Caco-2 (cell line): ENCODE measurements at regions of chr12 and their contacts with region 1.

Region 1: DNA sequence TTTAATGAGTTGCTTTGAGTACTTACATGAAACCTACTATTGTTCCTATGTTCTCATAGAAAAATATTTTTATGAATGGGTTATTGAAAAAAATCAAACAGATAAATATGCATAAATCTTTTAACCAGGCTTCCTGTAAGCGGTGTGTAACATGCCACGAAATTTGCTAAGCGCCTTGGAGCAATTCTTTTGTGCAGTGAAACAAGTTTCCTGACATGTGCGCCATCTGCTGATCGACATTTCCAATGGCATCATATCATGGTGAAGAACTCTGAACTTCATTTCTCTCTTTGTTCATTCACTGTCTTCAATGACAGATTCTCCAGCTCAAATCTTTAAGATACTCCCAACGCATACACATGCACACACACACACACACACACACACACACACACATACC is 145.6 kb upstream of the NAV3 start:
- DNase-seq: peak; percentile 40 to 61
- H3K4me3 ChIP-seq: no peak overlapping the region
- H3K4me3 Mint-ChIP-seq: no peak overlapping the region
- H3K27ac Mint-ChIP-seq: no peak overlapping the region
- H3K4me1 ChIP-seq: no peaks in the 10 kb centered on the region
- H3K4me1 Mint-ChIP-seq: no peaks in the 10 kb centered on the region
- H3K27me3 ChIP-seq: no peaks in the 10 kb centered on the region
- H3K27me3 Mint-ChIP-seq: peaks cover 3% of the 10 kb centered on the region
- CTCF ChIP-seq: peak; percentile 39 to 64

Region 2: GRCh38 chr12:76952995-76953394 is 732.1 kb before region 1 on chr12:
- CTCF ChIA-PET with region 1: no interaction called
- POLR2A ChIA-PET with region 1: no interaction called
- intact Hi-C with region 1: loop called (anchors 10 kb)
- DNase-seq: peak in 1 of 2 experiments; percentile 40
- H3K4me3 ChIP-seq: no peak overlapping the region
- H3K4me3 Mint-ChIP-seq: no peak overlapping the region
- H3K27ac Mint-ChIP-seq: no peak overlapping the region
- H3K4me1 ChIP-seq: no peaks in the 10 kb centered on the region
- H3K4me1 Mint-ChIP-seq: no peaks in the 10 kb centered on the region
- H3K27me3 ChIP-seq: no peaks in the 10 kb centered on the region
- H3K27me3 Mint-ChIP-seq: peaks cover 16% of the 10 kb centered on the region
- CTCF ChIP-seq: peak in 1 of 2 experiments; percentile 33

Region 3: GRCh38 chr12:77049767-77050353 is 635.3 kb before region 1 on chr12:
- CTCF ChIA-PET with region 1: no interaction called
- POLR2A ChIA-PET with region 1: no interaction called
- intact Hi-C with region 1: loop called (anchors 1 kb)
- DNase-seq: peak in 1 of 2 experiments; percentile 61
- H3K4me3 ChIP-seq: no peak overlapping the region
- H3K4me3 Mint-ChIP-seq: no peak overlapping the region
- H3K27ac Mint-ChIP-seq: no peak overlapping the region
- H3K4me1 ChIP-seq: no peaks in the 10 kb centered on the region
- H3K4me1 Mint-ChIP-seq: no peaks in the 10 kb centered on the region
- H3K27me3 ChIP-seq: no peaks in the 10 kb centered on the region
- H3K27me3 Mint-ChIP-seq: no peaks in the 10 kb centered on the region
- CTCF ChIP-seq: peak; percentile 47 to 69

Region 4: DNA sequence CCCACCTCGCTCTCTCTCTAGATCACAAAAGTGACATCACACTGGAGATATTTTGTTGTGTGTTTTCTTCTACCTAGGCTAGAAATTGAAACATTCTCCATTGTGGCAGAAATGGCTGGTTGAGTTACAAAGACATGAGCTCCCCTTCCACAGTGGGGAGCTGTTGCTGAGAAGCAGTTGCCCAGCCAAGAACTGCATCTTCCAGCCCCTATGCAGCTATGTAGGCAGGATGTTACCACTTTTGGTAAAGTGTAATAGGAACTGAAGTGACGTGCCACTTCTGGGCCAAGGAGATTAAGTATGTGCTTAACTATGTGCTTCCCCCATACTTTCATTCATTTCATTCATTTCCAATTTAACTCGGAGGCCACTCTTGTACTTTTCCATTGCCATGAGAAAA is 481.0 kb before region 1 on chr12:
- CTCF ChIA-PET with region 1: no interaction called
- POLR2A ChIA-PET with region 1: no interaction called
- intact Hi-C with region 1: loop called (anchors 1 kb)
- DNase-seq: peak in 1 of 2 experiments; percentile 10
- H3K4me3 ChIP-seq: no peak overlapping the region
- H3K4me3 Mint-ChIP-seq: no peak overlapping the region
- H3K27ac Mint-ChIP-seq: no peak overlapping the region
- H3K4me1 ChIP-seq: no peaks in the 10 kb centered on the region
- H3K4me1 Mint-ChIP-seq: no peaks in the 10 kb centered on the region
- H3K27me3 ChIP-seq: no peaks in the 10 kb centered on the region
- H3K27me3 Mint-ChIP-seq: no peaks in the 10 kb centered on the region
- CTCF ChIP-seq: no peak

Region 5: DNA sequence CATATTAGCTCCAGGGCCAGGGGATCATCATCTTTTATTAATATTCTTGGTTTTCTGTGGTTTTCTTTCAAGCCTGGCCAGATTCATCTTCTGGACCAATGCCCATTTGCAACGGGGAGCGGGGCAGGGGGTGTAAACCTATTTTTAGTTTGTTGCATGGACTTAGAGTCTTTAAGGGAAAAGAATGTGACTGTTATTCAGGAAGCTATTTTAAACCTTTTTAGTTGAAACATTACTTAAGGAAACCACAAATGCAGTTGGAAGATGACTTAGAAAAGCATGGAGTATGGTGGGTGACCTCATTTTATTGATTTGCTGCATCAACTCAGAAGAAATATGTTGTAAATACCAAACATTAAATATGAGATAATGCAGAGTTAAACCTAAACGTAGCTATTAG is 251.3 kb before region 1 on chr12:
- CTCF ChIA-PET with region 1: no interaction called
- POLR2A ChIA-PET with region 1: no interaction called
- intact Hi-C with region 1: loop called (anchors 10 kb)
- DNase-seq: no peak
- H3K4me3 ChIP-seq: no peak overlapping the region
- H3K4me3 Mint-ChIP-seq: no peak overlapping the region
- H3K27ac Mint-ChIP-seq: no peak overlapping the region
- H3K4me1 ChIP-seq: no peaks in the 10 kb centered on the region
- H3K4me1 Mint-ChIP-seq: no peaks in the 10 kb centered on the region
- H3K27me3 ChIP-seq: no peaks in the 10 kb centered on the region
- H3K27me3 Mint-ChIP-seq: peaks cover 3% of the 10 kb centered on the region
- CTCF ChIP-seq: no peak

Region 6: DNA sequence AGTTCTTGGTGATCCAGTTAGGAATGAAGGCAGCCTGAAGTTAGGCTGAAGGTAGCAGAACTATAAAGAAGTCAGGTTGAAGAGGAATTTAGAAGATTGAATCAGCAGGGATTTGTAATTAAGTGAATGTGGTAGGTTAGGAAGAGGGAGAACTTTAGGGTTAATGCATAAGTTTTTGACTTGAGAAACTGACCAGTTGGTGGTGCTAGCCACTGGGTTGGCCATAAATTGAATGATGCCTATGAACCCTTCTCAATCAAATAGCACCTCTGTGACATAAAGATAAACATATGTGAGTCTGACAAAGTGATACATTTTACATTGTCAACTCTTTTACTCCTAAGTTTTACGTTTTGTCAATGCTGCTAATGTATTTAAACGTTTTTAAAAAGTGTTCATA is 145.0 kb before region 1 on chr12:
- CTCF ChIA-PET with region 1: no interaction called
- POLR2A ChIA-PET with region 1: no interaction called
- intact Hi-C with region 1: loop called (anchors 5 kb)
- DNase-seq: no peak
- H3K4me3 ChIP-seq: no peak overlapping the region
- H3K4me3 Mint-ChIP-seq: no peak overlapping the region
- H3K27ac Mint-ChIP-seq: no peak overlapping the region
- H3K4me1 ChIP-seq: no peaks in the 10 kb centered on the region
- H3K4me1 Mint-ChIP-seq: no peaks in the 10 kb centered on the region
- H3K27me3 ChIP-seq: no peaks in the 10 kb centered on the region
- H3K27me3 Mint-ChIP-seq: no peaks in the 10 kb centered on the region
- CTCF ChIP-seq: peak in 1 of 2 experiments; percentile 2

Region 7: GRCh38 chr12:77615331-77615730 is 69.8 kb before region 1 on chr12:
- CTCF ChIA-PET with region 1: no interaction called
- POLR2A ChIA-PET with region 1: no interaction called
- intact Hi-C with region 1: loop called (anchors 1 kb)
- DNase-seq: no peak
- H3K4me3 ChIP-seq: no peak overlapping the region
- H3K4me3 Mint-ChIP-seq: no peak overlapping the region
- H3K27ac Mint-ChIP-seq: no peak overlapping the region
- H3K4me1 ChIP-seq: no peaks in the 10 kb centered on the region
- H3K4me1 Mint-ChIP-seq: no peaks in the 10 kb centered on the region
- H3K27me3 ChIP-seq: no peaks in the 10 kb centered on the region
- H3K27me3 Mint-ChIP-seq: no peaks in the 10 kb centered on the region
- CTCF ChIP-seq: no peak

Region 8: GRCh38 chr12:77816196-77816595 is 131.1 kb after region 1 on chr12:
- CTCF ChIA-PET with region 1: no interaction called
- POLR2A ChIA-PET with region 1: no interaction called
- intact Hi-C with region 1: no loop called
- DNase-seq: no peak
- H3K4me3 ChIP-seq: no peak overlapping the region
- H3K4me3 Mint-ChIP-seq: no peak overlapping the region
- H3K27ac Mint-ChIP-seq: no peak overlapping the region
- H3K4me1 ChIP-seq: no peaks in the 10 kb centered on the region
- H3K4me1 Mint-ChIP-seq: no peaks in the 10 kb centered on the region
- H3K27me3 ChIP-seq: no peaks in the 10 kb centered on the region
- H3K27me3 Mint-ChIP-seq: no peaks in the 10 kb centered on the region
- CTCF ChIP-seq: no peak